Heart right ventricle (tissue), 16 donors: ENCODE measurements at regions of chr16 and their contacts with region 1.

Region 1: GRCh38 chr16:64051824-64052223 is 1070.0 kb downstream of the CDH11 start:
- DNase-seq: no peak
- ATAC-seq: peak in 1 of 8 donors; percentile 47
- H3K4me3 ChIP-seq: no peak overlapping the region
- H3K27ac ChIP-seq: no peak overlapping the region
- H3K4me1 ChIP-seq: no peaks in the 10 kb centered on the region
- H3K27me3 ChIP-seq: no peaks in the 10 kb centered on the region
- CTCF ChIP-seq: peak in 6 of 9 donors; percentile 9 to 45 (median 34)

Region 2: GRCh38 chr16:63461248-63461841 is 590.5 kb before region 1 on chr16:
- intact Hi-C with region 1: loop called in 2 of 10 experiments (anchors 5 kb)
- DNase-seq: no peak
- ATAC-seq: peak in 4 of 8 donors; percentile 46 to 60 (median 52)
- H3K4me3 ChIP-seq: no peak overlapping the region
- H3K27ac ChIP-seq: no peak overlapping the region
- H3K4me1 ChIP-seq: peaks cover 0 to 4% (median 0%) of the 10 kb centered on the region in 9 donors
- H3K27me3 ChIP-seq: no peaks in the 10 kb centered on the region
- CTCF ChIP-seq: peak in 7 of 9 donors; percentile 18 to 64 (median 55)

Region 3: DNA sequence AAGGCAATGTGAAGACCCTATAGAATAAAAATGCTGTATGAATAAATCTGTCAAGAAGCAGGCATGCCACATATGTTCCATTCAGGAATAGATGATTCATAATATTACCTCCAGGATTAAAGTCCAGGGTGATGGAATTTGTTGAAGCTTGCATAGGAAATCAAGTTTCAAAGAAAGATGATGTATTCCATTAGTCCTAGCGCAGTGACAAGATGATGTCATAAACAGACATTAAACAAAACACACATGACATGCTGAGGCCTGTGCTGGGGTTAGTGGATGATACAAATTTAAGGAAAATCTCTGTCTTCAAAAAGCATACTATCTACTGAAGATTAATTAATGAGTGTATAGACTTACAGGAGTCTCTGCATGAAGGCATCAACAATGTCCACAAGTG is 44.9 kb after region 1 on chr16:
- intact Hi-C with region 1: loop called in 1 of 10 experiments (anchors 2 kb)
- DNase-seq: no peak
- ATAC-seq: no peak
- H3K4me3 ChIP-seq: no peak overlapping the region
- H3K27ac ChIP-seq: no peak overlapping the region
- H3K4me1 ChIP-seq: no peaks in the 10 kb centered on the region
- H3K27me3 ChIP-seq: no peaks in the 10 kb centered on the region
- CTCF ChIP-seq: no peak